Lower leg skin (tissue), 4 donors: ENCODE measurements at regions of chr17 and their contacts with region 1.

Region 1: DNA sequence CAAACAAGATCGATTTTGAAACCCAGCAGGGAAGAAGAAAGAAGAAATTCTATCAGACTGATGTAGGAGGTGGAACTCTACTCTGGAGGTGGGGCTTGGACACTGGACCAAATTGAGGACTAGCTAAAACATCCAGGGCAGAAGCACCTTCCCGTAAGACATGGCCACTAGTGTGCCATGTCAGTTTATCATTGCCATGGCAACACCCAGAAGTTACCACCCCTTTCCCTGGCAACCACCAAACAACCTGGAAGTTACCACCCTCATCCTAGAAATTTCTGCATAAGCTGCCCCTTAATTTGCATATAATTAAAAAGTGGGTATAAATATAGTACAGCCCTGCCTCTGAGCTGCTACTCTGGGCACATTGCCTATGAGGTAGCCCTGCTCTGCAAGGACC is 66.7 kb downstream of the NACA2 start:
- DNase-seq: no peak
- H3K4me3 ChIP-seq: no peak overlapping the region
- CTCF ChIP-seq: no peak
- POLR2A ChIP-seq: no peak

Region 2: DNA sequence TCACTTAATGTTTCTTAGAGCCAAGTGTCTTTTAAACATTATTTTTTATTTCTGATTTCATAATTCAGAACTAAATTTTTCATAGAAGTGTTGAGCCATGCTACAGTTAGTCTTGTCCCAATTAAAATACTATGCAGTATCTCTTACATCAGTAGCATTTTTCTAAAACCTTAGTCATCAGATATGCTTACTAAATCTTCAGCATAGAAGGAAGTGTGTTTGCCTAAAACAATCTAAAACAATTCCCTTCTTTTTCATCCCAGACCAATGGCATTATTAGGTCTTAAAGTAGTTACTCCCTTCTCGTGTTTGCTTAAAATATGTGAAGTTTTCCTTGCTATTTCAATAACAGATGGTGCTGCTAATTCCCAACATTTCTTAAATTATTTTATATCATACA is 860.3 kb before region 1 on chr17:
- intact Hi-C with region 1: no loop called
- DNase-seq: no peak
- H3K4me3 ChIP-seq: no peak overlapping the region
- CTCF ChIP-seq: no peak
- POLR2A ChIP-seq: no peak

Region 3: GRCh38 chr17:60712675-60713074 is 811.6 kb before region 1 on chr17:
- intact Hi-C with region 1: loop called (anchors 5 kb)
- DNase-seq: no peak
- H3K4me3 ChIP-seq: no peak overlapping the region
- CTCF ChIP-seq: no peak
- POLR2A ChIP-seq: no peak

Region 4: DNA sequence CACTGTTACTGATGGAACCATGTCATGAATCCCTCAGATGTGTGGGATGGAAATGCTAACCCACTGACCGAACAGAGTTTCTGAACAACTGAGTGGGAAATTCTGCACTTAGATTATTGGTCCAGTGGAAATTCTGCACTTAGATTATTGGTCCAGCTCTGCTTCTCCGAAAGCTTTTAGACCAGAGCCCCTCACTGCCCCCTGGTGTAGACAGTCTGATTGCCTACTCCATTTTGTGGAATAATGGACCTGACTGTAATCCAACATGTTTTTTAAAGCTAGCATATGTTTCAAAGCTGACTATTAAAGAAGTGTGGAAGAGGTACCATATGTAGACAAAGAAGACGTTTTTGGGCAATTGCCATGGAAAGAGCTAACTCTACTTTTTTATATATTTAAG is 175.0 kb before region 1 on chr17:
- intact Hi-C with region 1: no loop called
- DNase-seq: no peak
- H3K4me3 ChIP-seq: no peak overlapping the region
- CTCF ChIP-seq: no peak
- POLR2A ChIP-seq: no peak

Region 5: GRCh38 chr17:61647047-61647446 is 122.7 kb after region 1 on chr17:
- intact Hi-C with region 1: no loop called
- DNase-seq: no peak
- H3K4me3 ChIP-seq: no peak overlapping the region
- CTCF ChIP-seq: no peak
- POLR2A ChIP-seq: no peak